ENCODE measurements at regions of chr14 and their contacts with region 1.

Region 1: GRCh38 chr14:24332268-24332993 is 2.4 kb downstream of the ADCY4 start:
- DNase-seq: peak; percentile 92
- ATAC-seq: peak; percentile 66
- H3K4me3 Mint-ChIP-seq: peak overlapping the region; percentile 73
- H3K27ac Mint-ChIP-seq: peak overlapping the region; percentile 82
- H3K4me1 Mint-ChIP-seq: peaks cover 65% of the 10 kb centered on the region
- H3K27me3 Mint-ChIP-seq: peaks cover 38% of the 10 kb centered on the region

Region 2: DNA sequence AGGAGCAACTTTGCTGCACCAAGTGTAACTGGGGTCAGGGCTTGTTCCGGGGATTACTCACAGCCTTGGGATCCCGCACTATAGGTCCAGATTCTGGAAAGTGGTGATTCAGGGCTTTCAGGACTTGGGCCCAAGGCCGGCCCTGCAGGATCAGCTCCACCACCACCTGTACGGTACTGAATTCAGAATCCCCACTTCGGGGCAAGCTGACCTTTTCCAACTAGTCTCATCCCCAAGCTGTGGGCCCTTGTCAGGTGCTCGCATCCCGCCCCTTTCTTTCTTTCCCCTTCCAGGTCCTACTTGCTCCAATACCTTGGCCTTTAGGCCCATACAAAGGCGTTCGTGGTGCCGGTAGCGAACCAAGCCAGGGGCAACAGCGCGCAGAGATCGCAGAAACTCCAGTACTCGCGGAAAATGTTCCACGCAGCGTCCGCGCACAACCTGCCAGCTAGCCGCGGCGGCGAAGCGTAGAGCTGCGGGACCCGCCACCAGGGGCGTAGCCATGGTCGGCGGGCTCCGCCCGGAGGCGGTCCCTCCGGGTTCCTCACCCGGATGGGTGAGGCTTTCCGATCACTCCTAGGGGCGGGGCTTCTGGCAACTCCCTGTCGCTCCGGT is 90.5 kb before region 1 on chr14:
- CTCF ChIA-PET with region 1: interaction called, 112 read pairs
- DNase-seq: peak; percentile 96
- ATAC-seq: peak; percentile 83
- H3K4me3 Mint-ChIP-seq: peak overlapping the region; percentile 96
- H3K27ac Mint-ChIP-seq: peak overlapping the region; percentile 100
- H3K4me1 Mint-ChIP-seq: peaks cover 59% of the 10 kb centered on the region
- H3K27me3 Mint-ChIP-seq: no peaks in the 10 kb centered on the region

Region 3: DNA sequence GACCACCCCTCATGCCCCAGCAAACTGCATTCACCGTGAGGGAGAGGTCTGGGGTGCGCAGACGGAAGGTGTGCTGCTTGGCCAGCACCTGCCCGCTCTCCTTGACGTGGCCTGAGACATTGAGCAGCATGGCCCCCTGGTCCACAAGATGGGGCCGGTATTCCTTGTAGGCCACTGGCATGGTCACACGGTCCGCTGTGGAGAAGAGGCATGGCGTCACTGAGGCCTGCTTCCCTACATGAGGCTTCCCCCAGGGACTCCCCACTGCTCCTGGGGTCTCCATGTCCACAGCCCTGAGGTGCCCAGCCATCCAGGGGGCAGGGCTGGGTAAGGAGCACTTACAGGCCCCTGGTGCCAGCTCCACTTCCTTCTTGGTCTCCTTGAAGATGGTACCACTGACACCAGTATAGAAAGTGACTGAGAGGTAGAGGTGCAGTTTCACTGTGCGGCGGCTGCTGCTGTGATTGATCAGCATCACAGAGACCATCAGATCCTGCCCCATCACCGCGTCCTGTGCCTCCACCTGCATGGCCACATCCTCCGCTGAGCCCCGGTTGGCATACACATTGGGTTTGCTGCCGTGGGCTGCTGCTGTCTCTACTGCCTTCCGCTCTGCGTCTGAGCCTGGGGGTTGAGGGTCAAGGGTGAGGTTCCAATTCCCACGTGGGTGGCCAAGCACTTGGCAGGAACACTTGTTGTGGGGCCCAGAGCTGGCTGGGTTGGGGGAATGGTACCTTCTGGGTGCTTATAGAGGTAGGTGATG is 77.6 kb before region 1 on chr14:
- CTCF ChIA-PET with region 1: no interaction called
- DNase-seq: no peak
- ATAC-seq: no peak
- H3K4me3 Mint-ChIP-seq: no peak overlapping the region
- H3K27ac Mint-ChIP-seq: no peak overlapping the region
- H3K4me1 Mint-ChIP-seq: peaks cover 15% of the 10 kb centered on the region
- H3K27me3 Mint-ChIP-seq: no peaks in the 10 kb centered on the region

Region 4: GRCh38 chr14:24299255-24300195 is 32.9 kb before region 1 on chr14 and contains the starts of genes DHRS1 and NOP9:
- CTCF ChIA-PET with region 1: interaction called, 20 read pairs
- DNase-seq: peak; percentile 93
- ATAC-seq: peak; percentile 87
- H3K4me3 Mint-ChIP-seq: peak within 1 kb of the TSS; percentile 86
- H3K27ac Mint-ChIP-seq: peak within 1 kb of the TSS; percentile 89
- H3K4me1 Mint-ChIP-seq: peaks cover 55% of the 10 kb centered on the region
- H3K27me3 Mint-ChIP-seq: no peaks in the 10 kb centered on the region
- total RNA-seq, gene DHRS1: 14.2 to 26.5 TPM
- total RNA-seq, gene NOP9: 34.2 to 38.3 TPM

Region 5: GRCh38 chr14:24317141-24317928 is 15.1 kb before region 1 on chr14:
- CTCF ChIA-PET with region 1: interaction called, 148 read pairs
- DNase-seq: no peak
- ATAC-seq: no peak
- H3K4me3 Mint-ChIP-seq: no peak overlapping the region
- H3K27ac Mint-ChIP-seq: no peak overlapping the region
- H3K4me1 Mint-ChIP-seq: peaks cover 44% of the 10 kb centered on the region
- H3K27me3 Mint-ChIP-seq: peaks cover 12% of the 10 kb centered on the region

Region 6: DNA sequence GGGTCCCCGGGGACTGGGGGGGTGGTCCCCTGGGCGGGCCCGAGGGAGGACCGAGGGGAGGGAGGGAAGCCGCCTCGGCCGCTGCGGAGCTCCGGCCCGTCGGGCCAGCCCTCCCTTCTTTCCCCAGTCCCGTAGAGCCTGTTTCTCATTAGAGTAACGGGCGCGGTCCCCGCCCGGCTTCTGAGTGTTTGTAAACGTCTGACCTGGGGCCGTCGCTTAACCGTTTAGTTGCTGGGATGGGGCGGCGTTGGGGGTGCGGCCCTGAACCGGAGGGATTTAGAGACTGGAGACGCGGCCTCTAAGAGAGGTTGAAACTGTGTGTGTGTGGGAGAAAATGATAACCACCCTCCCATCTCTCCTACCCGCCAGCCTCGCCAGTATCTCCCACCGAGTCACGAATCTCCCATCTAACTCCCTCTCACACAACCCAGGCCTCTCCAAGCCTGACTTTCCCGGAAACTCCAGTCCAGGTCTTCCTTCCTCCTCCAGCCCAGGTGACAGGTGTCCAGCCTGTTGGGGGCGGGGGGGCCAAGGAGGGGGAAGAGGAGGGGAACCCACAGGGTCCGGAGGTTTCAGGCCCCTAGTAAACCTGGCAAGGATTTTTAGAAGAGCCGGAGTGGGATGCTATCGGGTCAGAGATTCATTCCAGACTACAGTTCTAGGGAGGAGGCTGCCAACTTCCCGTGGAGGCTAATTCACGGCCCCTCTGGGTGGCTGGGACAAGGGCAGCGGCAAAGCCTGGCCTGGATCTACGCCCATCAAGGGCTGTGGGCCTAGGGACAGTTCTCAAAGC is 34.5 kb after region 1 on chr14:
- CTCF ChIA-PET with region 1: interaction called, 17 read pairs
- DNase-seq: no peak
- ATAC-seq: no peak
- H3K4me3 Mint-ChIP-seq: no peak overlapping the region
- H3K27ac Mint-ChIP-seq: no peak overlapping the region
- H3K4me1 Mint-ChIP-seq: peaks cover 24% of the 10 kb centered on the region
- H3K27me3 Mint-ChIP-seq: peaks cover 61% of the 10 kb centered on the region

Region 7: DNA sequence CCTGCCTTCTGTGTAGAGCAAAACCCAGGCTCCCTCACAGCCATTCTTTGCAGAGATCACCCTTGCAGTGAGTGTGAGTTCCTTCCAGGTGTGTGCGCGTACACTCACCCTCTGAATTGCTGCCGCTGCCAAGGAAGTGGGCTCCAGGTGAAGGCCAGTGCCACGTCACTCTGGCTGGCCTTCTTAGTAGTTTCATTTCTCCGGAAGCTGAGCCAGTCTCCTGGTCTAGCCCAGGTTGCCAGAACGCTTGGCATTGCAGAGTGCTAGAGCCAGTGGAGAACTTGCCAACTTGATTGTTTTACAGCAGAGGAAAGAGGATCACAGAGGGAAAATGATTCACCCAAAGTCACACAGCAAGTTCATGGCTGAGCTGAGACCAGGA is 86.1 kb after region 1 on chr14:
- CTCF ChIA-PET with region 1: interaction called, 854 read pairs
- DNase-seq: no peak
- ATAC-seq: no peak
- H3K4me3 Mint-ChIP-seq: no peak overlapping the region
- H3K27ac Mint-ChIP-seq: peak overlapping the region; percentile 24
- H3K4me1 Mint-ChIP-seq: no peaks in the 10 kb centered on the region
- H3K27me3 Mint-ChIP-seq: peaks cover 5% of the 10 kb centered on the region